Body of pancreas (tissue), 4 donors: ENCODE measurements at regions of chr10 and their contacts with region 1.

Region 1: DNA sequence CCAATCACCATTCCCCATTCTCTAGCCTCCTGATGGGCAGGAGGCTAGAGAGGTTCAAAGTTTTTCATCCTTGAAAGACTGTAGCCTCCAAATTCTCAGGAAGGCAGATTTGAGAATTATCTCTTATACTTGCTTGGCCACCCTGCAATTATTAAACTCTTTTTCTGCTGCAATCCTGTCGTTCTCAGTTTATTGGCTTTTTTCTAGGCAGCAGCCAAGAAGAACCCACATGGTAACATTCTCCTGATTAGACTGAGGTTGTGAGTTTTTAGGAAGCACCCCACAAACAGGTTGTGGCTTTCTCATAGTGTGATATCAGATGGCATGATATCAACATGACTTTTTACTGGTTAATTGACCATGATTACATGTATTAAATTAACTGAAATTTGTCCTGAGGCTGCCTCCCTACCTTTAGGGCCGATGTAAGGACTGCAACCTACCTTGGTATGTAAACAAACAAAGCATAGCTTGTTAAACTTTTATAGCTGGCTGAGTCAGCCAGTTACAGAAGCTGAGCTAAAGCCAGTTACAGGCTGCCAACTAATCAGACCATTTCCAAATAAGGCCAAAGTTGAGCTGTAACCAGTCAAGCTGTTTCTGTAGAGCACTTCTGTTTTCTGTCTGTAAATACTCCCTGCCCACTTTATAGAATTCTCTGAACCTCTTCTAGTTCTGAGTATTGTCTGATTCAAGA is 3.2 kb upstream of the ZNF248 start:
- DNase-seq: no peak
- ATAC-seq: no peak
- H3K4me3 ChIP-seq: no peak overlapping the region
- H3K27ac ChIP-seq: no peak overlapping the region
- H3K4me1 ChIP-seq: peaks cover 17% of the 10 kb centered on the region
- H3K27me3 ChIP-seq: no peaks in the 10 kb centered on the region
- CTCF ChIP-seq: no peak
- POLR2A ChIP-seq: no peak

Region 2: DNA sequence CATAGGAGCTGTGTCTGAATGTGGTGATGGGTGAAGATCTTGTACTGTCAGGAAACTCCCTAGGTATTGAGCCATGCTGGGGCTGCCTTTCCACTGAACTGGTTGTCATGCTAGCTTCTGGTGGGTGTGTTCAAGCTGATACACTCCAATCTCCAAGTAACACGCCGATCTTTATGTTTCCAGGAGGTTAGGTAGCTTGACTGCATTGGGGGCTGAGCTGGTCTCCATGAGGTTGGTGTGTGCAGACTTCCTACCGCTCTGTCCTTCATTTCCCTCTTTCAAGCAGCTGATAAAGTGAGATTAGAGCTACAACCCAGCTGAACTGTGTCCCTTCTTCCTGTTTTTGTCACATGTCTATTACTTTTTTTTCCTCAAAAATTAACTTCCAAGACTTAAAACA is 469.7 kb before region 1 on chr10:
- intact Hi-C with region 1: no loop called
- DNase-seq: no peak
- ATAC-seq: no peak
- H3K4me3 ChIP-seq: no peak overlapping the region
- H3K27ac ChIP-seq: no peak overlapping the region
- H3K4me1 ChIP-seq: no peaks in the 10 kb centered on the region
- H3K27me3 ChIP-seq: no peaks in the 10 kb centered on the region
- CTCF ChIP-seq: no peak
- POLR2A ChIP-seq: no peak

Region 3: DNA sequence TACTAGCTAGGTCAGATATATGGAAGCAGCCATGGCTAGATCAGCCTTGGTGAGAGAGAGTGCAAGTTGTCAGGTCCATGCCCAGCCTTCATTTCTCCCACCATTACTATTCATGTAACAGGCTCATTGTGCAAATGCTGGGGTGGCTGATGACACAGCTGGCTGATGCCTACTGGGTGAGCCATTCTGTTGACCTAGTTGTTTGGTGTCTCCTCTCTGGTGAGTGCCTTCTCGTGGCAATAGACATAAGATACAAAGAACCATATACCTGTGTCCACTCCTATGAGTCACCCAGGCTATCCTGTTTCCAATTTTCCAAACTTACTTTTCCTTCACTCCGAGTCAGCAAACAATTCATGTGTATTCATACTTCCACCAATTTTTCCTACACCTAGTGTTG is 69.8 kb after region 1 on chr10:
- intact Hi-C with region 1: no loop called
- DNase-seq: no peak
- ATAC-seq: no peak
- H3K4me3 ChIP-seq: no peak overlapping the region
- H3K27ac ChIP-seq: no peak overlapping the region
- H3K4me1 ChIP-seq: no peaks in the 10 kb centered on the region
- H3K27me3 ChIP-seq: no peaks in the 10 kb centered on the region
- CTCF ChIP-seq: no peak
- POLR2A ChIP-seq: no peak

Region 4: GRCh38 chr10:38010119-38010903 is 149.7 kb after region 1 on chr10 and contains the start of gene ZNF33A:
- intact Hi-C with region 1: no loop called
- DNase-seq: peak; percentile 93 to 96 (median 96)
- ATAC-seq: peak; percentile 98
- H3K4me3 ChIP-seq: peak within 1 kb of the TSS; percentile 56 to 77
- H3K27ac ChIP-seq: peak within 1 kb of the TSS; percentile 93 to 99 (median 96)
- H3K4me1 ChIP-seq: peaks cover 17% of the 10 kb centered on the region
- H3K27me3 ChIP-seq: no peaks in the 10 kb centered on the region
- CTCF ChIP-seq: peak in 1 of 7 experiments; percentile 16
- POLR2A ChIP-seq: peak in 2 of 3 donors; percentile 77 to 78
- total RNA-seq, gene ZNF33A: 20.4 to 25.7 TPM

Region 5: DNA sequence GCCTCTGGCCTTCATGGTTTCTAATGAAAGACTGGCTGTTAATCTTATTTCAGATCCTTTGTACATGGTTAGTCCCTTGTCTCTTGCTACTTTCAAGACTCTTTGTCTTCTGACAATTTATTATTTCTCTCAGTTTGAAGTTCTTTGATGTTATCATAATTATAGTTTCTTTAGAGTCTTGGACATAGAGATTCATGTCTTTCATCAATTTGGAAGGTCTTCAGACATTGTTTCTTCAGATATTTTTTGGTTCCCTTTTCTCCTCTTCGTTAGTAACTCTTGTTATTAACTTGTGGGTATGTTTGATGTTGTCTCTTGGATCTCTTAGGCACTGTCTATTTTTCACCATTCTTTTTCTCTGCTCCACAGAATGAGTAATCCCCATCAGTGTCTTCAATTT is 242.2 kb after region 1 on chr10:
- intact Hi-C with region 1: loop called (anchors 10 kb)
- DNase-seq: no peak
- ATAC-seq: no peak
- H3K4me3 ChIP-seq: no peak overlapping the region
- H3K27ac ChIP-seq: no peak overlapping the region
- H3K4me1 ChIP-seq: no peaks in the 10 kb centered on the region
- H3K27me3 ChIP-seq: no peaks in the 10 kb centered on the region
- CTCF ChIP-seq: no peak
- POLR2A ChIP-seq: no peak